Activated CD4-positive, alpha-beta T cell treated with anti-CD3 and anti-CD28 coated beads for 36 hours (primary cell): ENCODE measurements at regions of chr9 and their contacts with region 1.

Region 1: DNA sequence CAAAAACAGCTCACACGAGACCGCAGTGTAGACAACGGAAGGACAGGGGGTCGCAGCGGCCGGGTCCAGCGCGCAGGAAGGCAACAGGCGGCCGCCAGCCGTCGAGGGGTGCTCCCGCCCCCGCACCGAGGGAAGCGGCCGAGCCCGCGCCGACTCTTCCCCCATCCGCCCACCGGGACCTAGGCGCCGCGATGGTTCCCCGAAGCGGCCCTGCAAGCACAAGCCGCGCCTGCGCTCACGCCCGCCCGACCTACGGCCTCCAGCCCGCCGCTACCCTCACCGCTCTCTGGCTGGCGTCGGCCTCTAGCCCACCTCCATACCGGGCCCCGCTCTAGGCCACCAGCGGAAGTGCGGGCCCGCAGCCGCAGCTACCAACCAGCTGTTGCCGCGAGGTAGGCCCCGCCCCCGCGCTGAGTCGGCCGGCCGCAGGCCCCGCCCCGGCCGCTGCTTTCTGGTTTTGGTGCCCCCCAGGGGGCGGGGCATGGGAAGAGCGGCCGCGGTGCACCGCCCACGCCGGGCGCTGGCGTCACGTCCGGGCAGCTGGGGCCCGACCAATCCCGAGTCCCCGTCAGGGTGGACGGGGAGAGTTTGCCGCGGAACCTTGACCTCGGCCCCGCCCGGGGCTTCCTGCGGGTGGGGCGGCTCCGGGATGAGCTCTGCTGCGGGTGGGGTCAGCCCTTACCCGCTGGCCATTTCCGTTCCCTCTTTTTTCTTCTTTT is at the start of gene SETX:
- DNase-seq: peak; percentile 98
- ATAC-seq: peak; percentile 81
- H3K4me3 Mint-ChIP-seq: peak within 1 kb of the TSS; percentile 79
- H3K27ac Mint-ChIP-seq: peak within 1 kb of the TSS; percentile 98
- H3K4me1 Mint-ChIP-seq: peaks cover 36% of the 10 kb centered on the region
- H3K27me3 Mint-ChIP-seq: no peaks in the 10 kb centered on the region
- total RNA-seq, gene SETX: 37.5 to 38.1 TPM

Region 2: GRCh38 chr9:131125128-131126058 is 1229.4 kb before region 1 on chr9 and contains the start of gene NUP214:
- CTCF ChIA-PET with region 1: no interaction called
- POLR2A ChIA-PET with region 1: no interaction called
- intact Hi-C with region 1: loop called in 1 of 2 experiments (anchors 2 kb)
- DNase-seq: peak; percentile 100
- ATAC-seq: peak; percentile 100
- H3K4me3 Mint-ChIP-seq: peak within 1 kb of the TSS; percentile 94
- H3K27ac Mint-ChIP-seq: peak within 1 kb of the TSS; percentile 92
- H3K4me1 Mint-ChIP-seq: peaks cover 31% of the 10 kb centered on the region
- H3K27me3 Mint-ChIP-seq: no peaks in the 10 kb centered on the region
- total RNA-seq, gene NUP214: 61.4 to 97.7 TPM

Region 3: DNA sequence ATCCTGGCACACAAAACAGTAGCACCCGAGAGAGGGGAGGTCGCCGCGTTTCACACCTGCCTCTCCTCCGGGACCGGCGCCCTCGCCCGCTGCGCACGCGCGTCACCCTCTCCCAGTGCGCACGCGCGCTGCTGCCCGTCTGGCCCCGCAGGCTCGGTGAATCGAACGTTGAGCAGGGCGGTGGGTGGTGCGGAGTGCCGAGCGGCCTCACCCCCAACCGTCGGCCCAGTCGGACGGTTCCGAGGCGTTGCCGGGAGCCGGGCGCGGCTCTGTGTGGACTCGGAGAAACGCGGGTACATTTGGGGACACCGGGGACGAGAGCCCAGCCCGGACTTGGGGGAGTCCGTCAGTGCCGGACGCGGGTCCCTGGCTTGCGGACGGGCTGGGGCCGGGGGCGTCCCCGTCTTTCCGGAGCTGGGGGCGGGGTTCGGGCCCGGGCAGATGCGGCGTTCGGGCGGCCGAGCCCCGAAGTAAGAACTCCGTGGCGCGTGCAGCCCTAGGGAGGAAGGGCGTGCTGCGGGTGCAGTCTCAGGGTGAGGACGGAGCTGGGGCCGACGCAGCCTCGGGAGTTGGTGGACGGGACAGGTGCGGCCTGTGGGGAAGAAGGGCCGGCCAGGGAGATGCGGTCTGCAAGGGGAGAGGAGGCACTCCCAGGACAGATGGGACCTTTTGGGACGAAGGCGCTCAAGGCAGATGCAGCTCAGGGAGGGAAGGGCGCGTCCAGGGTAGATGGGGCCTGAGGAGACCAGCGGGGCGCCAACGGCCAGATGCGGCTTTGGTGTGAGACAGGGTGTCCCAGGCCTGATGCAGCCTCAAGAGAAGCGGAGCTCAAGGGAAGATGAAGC is 851.8 kb before region 1 on chr9 and contains the start of gene POMT1:
- CTCF ChIA-PET with region 1: no interaction called
- POLR2A ChIA-PET with region 1: no interaction called
- intact Hi-C with region 1: loop called in 1 of 2 experiments (anchors 2 kb)
- DNase-seq: peak; percentile 94
- ATAC-seq: peak; percentile 42
- H3K4me3 Mint-ChIP-seq: peak within 1 kb of the TSS; percentile 83
- H3K27ac Mint-ChIP-seq: peak within 1 kb of the TSS; percentile 84
- H3K4me1 Mint-ChIP-seq: peaks cover 53% of the 10 kb centered on the region
- H3K27me3 Mint-ChIP-seq: no peaks in the 10 kb centered on the region
- total RNA-seq, gene POMT1: 28.2 to 30.7 TPM

Region 4: GRCh38 chr9:132240753-132241493 is 113.9 kb before region 1 on chr9:
- CTCF ChIA-PET with region 1: no interaction called
- POLR2A ChIA-PET with region 1: interaction called, 3 read pairs
- intact Hi-C with region 1: loop called in 1 of 2 experiments (anchors 1 kb)
- DNase-seq: peak; percentile 100
- ATAC-seq: peak; percentile 95
- H3K4me3 Mint-ChIP-seq: peak overlapping the region; percentile 87
- H3K27ac Mint-ChIP-seq: peak overlapping the region; percentile 91
- H3K4me1 Mint-ChIP-seq: peaks cover 10% of the 10 kb centered on the region
- H3K27me3 Mint-ChIP-seq: peaks cover 2% of the 10 kb centered on the region

Region 5: GRCh38 chr9:132406554-132407122 is 51.8 kb after region 1 on chr9 and contains the start of gene TTF1:
- CTCF ChIA-PET with region 1: no interaction called
- POLR2A ChIA-PET with region 1: interaction called, 3 read pairs
- intact Hi-C with region 1: loop called (anchors 1 to 2 kb)
- DNase-seq: peak; percentile 97
- ATAC-seq: peak; percentile 79
- H3K4me3 Mint-ChIP-seq: peak within 1 kb of the TSS; percentile 96
- H3K27ac Mint-ChIP-seq: peak within 1 kb of the TSS; percentile 91
- H3K4me1 Mint-ChIP-seq: peaks cover 56% of the 10 kb centered on the region
- H3K27me3 Mint-ChIP-seq: peaks cover 9% of the 10 kb centered on the region
- total RNA-seq, gene TTF1: 31.9 to 33.4 TPM

Region 6: DNA sequence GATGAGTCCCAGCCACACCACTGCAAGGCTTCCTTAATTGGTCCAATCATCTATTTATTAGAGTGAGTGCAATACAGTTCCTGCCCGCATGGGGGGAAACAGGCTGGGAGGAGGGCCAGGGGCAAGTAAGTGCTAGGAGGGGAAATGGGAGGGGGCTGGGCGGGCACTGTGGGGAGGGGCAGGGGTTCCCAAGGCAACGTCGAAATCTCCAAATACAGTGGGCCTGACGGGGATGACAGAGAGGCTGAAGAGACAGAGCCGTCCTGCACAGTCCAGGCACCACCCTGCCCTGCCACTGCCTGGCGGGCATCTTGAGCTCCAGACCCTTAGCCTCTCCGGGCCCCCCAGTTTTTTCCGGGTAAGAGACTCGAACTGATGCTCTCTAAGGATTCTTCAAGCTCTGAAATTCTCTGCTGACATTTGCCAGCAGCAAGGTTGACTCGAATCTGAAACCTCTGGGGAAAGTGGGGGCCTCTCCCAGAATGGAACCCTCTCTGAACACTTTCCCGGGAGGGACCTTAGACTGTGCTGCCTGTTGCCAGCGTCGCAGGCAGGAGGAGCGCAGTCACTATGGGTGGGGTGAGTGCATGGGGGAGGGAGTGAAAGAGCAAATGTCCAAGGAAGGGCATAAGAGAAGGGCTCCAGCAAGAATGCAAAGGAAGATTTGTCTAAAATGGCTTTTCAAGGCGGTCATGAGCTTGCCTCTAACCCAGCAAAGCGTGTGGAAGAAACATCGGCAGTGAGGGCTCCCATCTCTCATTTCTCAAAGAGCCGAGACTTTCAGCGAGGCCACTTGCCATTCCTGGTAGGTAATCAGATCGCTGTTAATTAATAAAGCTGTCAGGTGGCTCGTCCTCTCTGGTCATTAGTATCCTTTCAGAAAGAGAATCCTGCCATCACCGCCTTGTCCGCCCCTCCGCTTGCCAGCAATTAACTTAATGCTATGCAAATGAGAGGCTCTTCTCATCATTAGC is 414.4 kb after region 1 on chr9:
- CTCF ChIA-PET with region 1: no interaction called
- POLR2A ChIA-PET with region 1: no interaction called
- intact Hi-C with region 1: loop called in 1 of 2 experiments (anchors 2 kb)
- DNase-seq: peak; percentile 82
- ATAC-seq: peak; percentile 75
- H3K4me3 Mint-ChIP-seq: peak overlapping the region; percentile 85
- H3K27ac Mint-ChIP-seq: peak overlapping the region; percentile 94
- H3K4me1 Mint-ChIP-seq: peaks cover 16% of the 10 kb centered on the region
- H3K27me3 Mint-ChIP-seq: no peaks in the 10 kb centered on the region

Region 7: GRCh38 chr9:133133681-133134418 is 779.1 kb after region 1 on chr9:
- CTCF ChIA-PET with region 1: no interaction called
- POLR2A ChIA-PET with region 1: no interaction called
- intact Hi-C with region 1: loop called in 1 of 2 experiments (anchors 10 kb)
- DNase-seq: peak; percentile 95
- ATAC-seq: peak; percentile 84
- H3K4me3 Mint-ChIP-seq: peak overlapping the region; percentile 41
- H3K27ac Mint-ChIP-seq: peak overlapping the region; percentile 98
- H3K4me1 Mint-ChIP-seq: peaks cover 75% of the 10 kb centered on the region
- H3K27me3 Mint-ChIP-seq: no peaks in the 10 kb centered on the region

Region 8: DNA sequence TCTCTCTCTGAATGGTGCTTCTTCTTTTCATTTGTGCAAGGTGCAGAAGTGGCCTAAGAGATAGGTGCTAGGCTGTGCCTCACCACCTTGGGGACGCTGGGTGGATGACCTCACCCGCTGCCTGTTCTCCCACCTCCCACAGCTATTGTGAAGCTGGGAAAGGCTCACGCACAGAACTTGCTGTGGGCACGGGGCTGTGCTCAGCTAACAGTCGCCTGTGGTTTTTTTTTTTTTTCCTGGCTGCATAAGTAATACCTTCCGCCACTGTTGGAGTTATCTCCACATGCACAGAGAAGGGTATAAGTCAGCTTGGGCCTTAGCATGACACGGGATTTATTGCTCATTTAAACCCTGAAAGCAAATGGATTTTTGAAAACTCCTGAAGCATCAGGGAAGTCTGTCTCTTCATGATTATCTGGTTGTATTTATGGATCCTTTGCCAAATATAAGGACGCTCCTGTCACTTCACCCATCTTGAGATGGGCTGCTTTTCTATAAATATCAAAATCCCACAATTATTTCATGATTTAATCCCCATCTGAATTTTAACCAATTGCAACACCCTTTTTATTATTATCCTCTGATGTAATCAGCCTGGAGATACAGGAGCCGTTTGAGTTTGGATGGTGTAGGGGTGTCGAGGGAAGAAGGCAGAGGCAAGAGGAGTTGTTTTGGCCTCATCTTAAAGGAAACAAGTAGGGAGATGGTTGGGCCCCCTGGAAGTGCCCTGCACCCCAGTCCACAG is 1290.4 kb after region 1 on chr9:
- CTCF ChIA-PET with region 1: no interaction called
- POLR2A ChIA-PET with region 1: no interaction called
- intact Hi-C with region 1: no loop called
- DNase-seq: no peak
- ATAC-seq: no peak
- H3K4me3 Mint-ChIP-seq: no peak overlapping the region
- H3K27ac Mint-ChIP-seq: no peak overlapping the region
- H3K4me1 Mint-ChIP-seq: no peaks in the 10 kb centered on the region
- H3K27me3 Mint-ChIP-seq: no peaks in the 10 kb centered on the region